BJ (cell line): ENCODE measurements at regions of chr17 and their contacts with region 1.

Region 1: GRCh38 chr17:37327341-37328090 is 48.3 kb upstream of the C17orf78 start:
- DNase-seq: peak; percentile 87
- H3K4me3 ChIP-seq: no peak overlapping the region
- H3K27me3 ChIP-seq: no peaks in the 10 kb centered on the region
- CTCF ChIP-seq: no peak

Region 2: GRCh38 chr17:37342589-37342988 is 15.1 kb after region 1 on chr17:
- CTCF ChIA-PET with region 1: interaction called, 10 read pairs
- POLR2A ChIA-PET with region 1: no interaction called
- DNase-seq: no peak
- H3K4me3 ChIP-seq: no peak overlapping the region
- H3K27me3 ChIP-seq: no peaks in the 10 kb centered on the region
- CTCF ChIP-seq: no peak

Region 3: GRCh38 chr17:37399404-37399803 is 71.9 kb after region 1 on chr17:
- CTCF ChIA-PET with region 1: no interaction called
- POLR2A ChIA-PET with region 1: interaction called, 10 read pairs
- DNase-seq: no peak
- H3K4me3 ChIP-seq: no peak overlapping the region
- H3K27me3 ChIP-seq: no peaks in the 10 kb centered on the region
- CTCF ChIP-seq: no peak